AG04450 (cell line): ENCODE measurements at regions of chr14 and their contacts with region 1.

Region 1: GRCh38 chr14:58637391-58638230 is at the start of gene DACT1:
- DNase-seq: peak; percentile 34
- H3K4me3 ChIP-seq: peak within 1 kb of the TSS; percentile 77
- H3K27ac ChIP-seq: peak within 1 kb of the TSS; percentile 92
- H3K27me3 ChIP-seq: no peaks in the 10 kb centered on the region
- CTCF ChIP-seq: no peak
- polyA plus RNA-seq, gene DACT1: 6.1 and 6.2 TPM in 2 replicates

Region 2: GRCh38 chr14:58565832-58566231 is 71.8 kb before region 1 on chr14:
- CTCF ChIA-PET with region 1: no interaction called
- POLR2A ChIA-PET with region 1: no interaction called
- DNase-seq: no peak
- H3K4me3 ChIP-seq: no peak overlapping the region
- H3K27ac ChIP-seq: no peak overlapping the region
- H3K27me3 ChIP-seq: no peaks in the 10 kb centered on the region
- CTCF ChIP-seq: no peak

Region 3: DNA sequence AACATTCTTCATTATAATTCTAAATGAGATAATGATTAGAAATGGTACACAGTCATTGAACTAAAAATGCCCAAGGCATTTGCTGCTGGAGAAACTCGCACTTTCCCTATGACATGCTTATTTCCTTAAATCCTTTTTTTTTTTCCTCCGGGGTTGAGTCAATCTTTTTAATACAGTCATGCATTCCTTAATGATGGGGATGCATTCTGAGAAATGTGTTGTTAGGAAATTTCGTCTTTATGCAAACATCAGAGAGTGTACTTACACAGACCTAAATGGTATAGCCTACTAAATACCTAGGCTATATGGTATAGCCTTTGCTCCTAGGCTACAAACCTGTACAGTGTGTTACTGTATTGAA is 29.7 kb before region 1 on chr14:
- CTCF ChIA-PET with region 1: interaction called, 13 read pairs
- POLR2A ChIA-PET with region 1: no interaction called
- DNase-seq: peak; percentile 42
- H3K4me3 ChIP-seq: no peak overlapping the region
- H3K27ac ChIP-seq: no peak overlapping the region
- H3K27me3 ChIP-seq: no peaks in the 10 kb centered on the region
- CTCF ChIP-seq: no peak

Region 4: GRCh38 chr14:59020382-59020781 is 382.8 kb after region 1 on chr14:
- CTCF ChIA-PET with region 1: interaction called, 10 read pairs
- POLR2A ChIA-PET with region 1: no interaction called
- DNase-seq: no peak
- H3K4me3 ChIP-seq: no peak overlapping the region
- H3K27ac ChIP-seq: no peak overlapping the region
- H3K27me3 ChIP-seq: no peaks in the 10 kb centered on the region
- CTCF ChIP-seq: peak; percentile 65

Region 5: DNA sequence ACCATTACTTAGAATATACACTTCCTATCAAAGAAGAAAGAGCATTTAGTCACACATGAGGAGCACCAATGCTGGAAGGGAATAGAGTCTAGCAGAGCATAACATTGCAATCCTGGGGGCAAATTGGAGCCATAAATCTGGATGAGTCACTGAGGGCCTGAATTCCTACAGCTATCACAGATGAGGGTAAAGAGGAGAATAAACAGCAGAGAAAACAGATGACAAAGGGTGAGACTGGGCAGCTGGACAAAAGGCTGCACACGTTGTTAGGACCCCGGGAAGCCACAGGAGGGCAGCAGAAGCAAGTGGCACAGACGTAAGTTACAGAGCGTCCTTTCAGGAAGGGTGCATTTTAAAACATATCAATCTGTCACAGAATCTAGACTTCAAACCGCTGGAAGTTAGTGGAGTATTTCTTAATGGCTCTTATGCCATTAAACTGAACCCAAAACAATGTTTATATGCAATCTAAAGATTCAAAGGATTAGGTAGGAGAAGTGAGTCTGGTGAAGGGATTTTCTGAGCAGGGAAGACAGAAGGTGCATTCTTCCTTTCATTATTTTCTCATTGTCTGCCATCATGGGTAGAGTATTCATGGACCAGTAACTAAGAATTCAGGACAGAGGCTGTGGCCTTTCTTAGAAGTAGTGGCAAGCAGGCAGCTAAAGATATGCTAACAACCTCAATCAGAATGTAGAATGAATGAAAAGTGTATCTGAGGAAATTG is 391.0 kb after region 1 on chr14:
- CTCF ChIA-PET with region 1: interaction called, 13 read pairs
- POLR2A ChIA-PET with region 1: no interaction called
- DNase-seq: peak; percentile 93
- H3K4me3 ChIP-seq: no peak overlapping the region
- H3K27ac ChIP-seq: peak overlapping the region; percentile 53
- H3K27me3 ChIP-seq: no peaks in the 10 kb centered on the region
- CTCF ChIP-seq: peak; percentile 95

Region 6: DNA sequence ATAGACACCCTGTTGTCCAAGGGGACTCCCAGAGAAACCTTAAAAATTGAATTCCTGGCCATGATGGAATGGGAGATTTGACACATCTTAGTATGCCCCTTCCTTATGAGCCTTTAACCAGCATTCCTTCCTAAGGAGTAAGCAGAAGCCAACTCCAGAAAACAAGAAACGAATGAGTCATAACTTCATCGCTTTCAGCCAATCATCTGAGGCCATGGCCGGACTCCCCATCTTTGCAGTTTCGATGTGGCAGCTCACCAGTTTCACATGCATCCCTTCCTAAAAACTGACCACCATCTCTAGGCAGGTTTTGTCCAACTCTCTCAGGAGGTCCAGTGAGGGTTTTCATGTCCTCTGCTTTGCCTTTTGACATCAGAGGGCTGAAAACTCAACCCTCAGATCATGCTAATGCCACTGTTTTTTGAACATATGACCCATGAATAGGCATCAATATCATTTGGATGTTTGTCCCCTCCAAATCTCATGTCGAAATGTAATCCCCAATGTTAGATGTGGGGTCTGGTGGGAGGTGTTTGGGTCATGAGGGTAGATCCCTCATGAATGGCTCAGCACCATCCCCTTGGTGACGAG is 570.7 kb after region 1 on chr14:
- CTCF ChIA-PET with region 1: no interaction called
- POLR2A ChIA-PET with region 1: no interaction called
- DNase-seq: no peak
- H3K4me3 ChIP-seq: no peak overlapping the region
- H3K27ac ChIP-seq: no peak overlapping the region
- H3K27me3 ChIP-seq: no peaks in the 10 kb centered on the region
- CTCF ChIP-seq: no peak